ENCODE measurements at regions of chr3 and their contacts with region 1.

Region 1: GRCh38 chr3:102529452-102529851 is 94.6 kb downstream of the ZPLD1 start:
- DNase-seq: peak; percentile 39
- ATAC-seq: peak; percentile 81
- H3K4me3 ChIP-seq: no peak overlapping the region
- H3K27ac ChIP-seq: no peak overlapping the region
- H3K4me1 ChIP-seq: no peaks in the 10 kb centered on the region
- H3K27me3 ChIP-seq: no peaks in the 10 kb centered on the region
- CTCF ChIP-seq: peak; percentile 51 to 61 (median 59); a peak in 5 of 6 replicates
- POLR2A ChIP-seq: no peak
- RAD21 ChIP-seq: peak; percentile 83

Region 2: GRCh38 chr3:102332205-102332604 is 197.2 kb before region 1 on chr3:
- CTCF ChIA-PET with region 1: no interaction called
- POLR2A ChIA-PET with region 1: no interaction called
- RAD21 ChIA-PET with region 1: no interaction called
- intact Hi-C with region 1: no loop called
- DNase-seq: no peak
- ATAC-seq: no peak
- H3K4me3 ChIP-seq: no peak overlapping the region
- H3K27ac ChIP-seq: no peak overlapping the region
- H3K4me1 ChIP-seq: no peaks in the 10 kb centered on the region
- H3K27me3 ChIP-seq: no peaks in the 10 kb centered on the region
- CTCF ChIP-seq: no peak
- POLR2A ChIP-seq: no peak
- RAD21 ChIP-seq: no peak

Region 3: DNA sequence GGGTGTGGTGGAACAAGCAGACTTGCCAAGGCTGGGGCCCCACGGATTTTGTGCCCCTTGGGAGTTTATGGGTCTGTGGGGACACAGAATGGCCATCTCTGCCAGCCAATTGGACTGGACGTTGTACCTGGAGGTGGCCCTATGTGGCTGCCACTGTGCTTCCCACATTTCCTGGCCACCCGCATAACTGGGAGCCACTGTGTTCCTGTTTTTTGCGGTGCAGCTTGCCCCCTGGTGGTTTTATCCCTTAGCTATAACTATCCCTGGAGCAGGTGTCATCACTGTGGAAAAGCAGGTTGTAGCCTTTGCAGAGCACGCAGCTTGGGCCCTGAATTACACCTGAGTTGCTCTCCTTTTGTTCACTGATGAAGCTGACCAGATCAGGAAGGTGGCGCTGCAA is 211.7 kb after region 1 on chr3:
- CTCF ChIA-PET with region 1: no interaction called
- POLR2A ChIA-PET with region 1: no interaction called
- RAD21 ChIA-PET with region 1: no interaction called
- intact Hi-C with region 1: loop called (anchors 5 kb)
- DNase-seq: peak; percentile 8
- ATAC-seq: peak; percentile 80
- H3K4me3 ChIP-seq: no peak overlapping the region
- H3K27ac ChIP-seq: no peak overlapping the region
- H3K4me1 ChIP-seq: no peaks in the 10 kb centered on the region
- H3K27me3 ChIP-seq: no peaks in the 10 kb centered on the region
- CTCF ChIP-seq: peak; percentile 38 to 51 (median 46); a peak in 4 of 6 replicates
- POLR2A ChIP-seq: no peak
- RAD21 ChIP-seq: peak; percentile 63